Thyroid gland (tissue), 4 donors: ENCODE measurements at regions of chr15 and their contacts with region 1.

Region 1: GRCh38 chr15:33700695-33701304 is 267.5 kb upstream of the CHRM5 start:
- DNase-seq: peak; percentile 75 to 79
- H3K4me3 ChIP-seq: no peak overlapping the region
- H3K27ac ChIP-seq: no peak overlapping the region
- H3K4me1 ChIP-seq: peaks cover 4 to 9% of the 10 kb centered on the region in 2 donors
- H3K27me3 ChIP-seq: no peaks in the 10 kb centered on the region
- CTCF ChIP-seq: peak; percentile 64 to 95 (median 88)
- POLR2A ChIP-seq: no peak

Region 2: GRCh38 chr15:33234014-33234461 is 466.8 kb before region 1 on chr15:
- intact Hi-C with region 1: loop called (anchors 10 kb)
- DNase-seq: peak; percentile 35 to 36
- H3K4me3 ChIP-seq: no peak overlapping the region
- H3K27ac ChIP-seq: no peak overlapping the region
- H3K4me1 ChIP-seq: no peaks in the 10 kb centered on the region
- H3K27me3 ChIP-seq: no peaks in the 10 kb centered on the region
- CTCF ChIP-seq: peak; percentile 30 to 79 (median 60)
- POLR2A ChIP-seq: no peak

Region 3: DNA sequence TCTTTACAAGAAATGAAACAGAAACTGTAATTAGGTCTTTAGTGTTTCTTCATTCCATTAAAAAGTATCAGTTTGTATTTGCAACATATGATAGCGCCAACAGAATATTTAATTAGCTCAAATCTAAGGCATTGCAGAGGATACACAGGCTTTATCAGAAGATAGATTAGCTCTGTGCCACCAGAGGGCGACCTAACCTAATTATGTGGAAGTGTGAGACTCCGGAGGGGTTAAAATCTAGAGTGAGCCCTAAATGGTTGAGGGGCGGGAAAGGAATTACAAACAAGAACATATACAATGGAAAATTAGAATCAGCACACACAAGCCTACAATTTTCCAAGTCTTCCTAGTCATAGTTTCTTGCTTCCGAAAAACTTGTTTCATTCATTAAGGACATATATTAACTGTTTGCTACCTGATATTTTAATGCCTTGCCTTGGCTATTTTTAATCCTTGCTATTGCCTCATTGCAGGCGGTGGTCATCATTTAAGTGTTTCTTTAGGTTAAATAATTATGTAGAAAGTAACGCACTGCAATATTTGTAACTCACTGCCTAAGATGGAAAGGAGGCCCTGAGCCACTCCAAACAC is 408.0 kb before region 1 on chr15:
- intact Hi-C with region 1: loop called (anchors 5 kb)
- DNase-seq: peak; percentile 65 to 66
- H3K4me3 ChIP-seq: no peak overlapping the region
- H3K27ac ChIP-seq: no peak overlapping the region
- H3K4me1 ChIP-seq: no peaks in the 10 kb centered on the region
- H3K27me3 ChIP-seq: no peaks in the 10 kb centered on the region
- CTCF ChIP-seq: peak; percentile 29 to 89 (median 60)
- POLR2A ChIP-seq: no peak